Prostate gland (tissue), 2 donors: ENCODE measurements at regions of chr2 and their contacts with region 1.

Region 1: GRCh38 chr2:158745044-158745865 is 49.9 kb upstream of the DAPL1 start:
- DNase-seq: peak; percentile 71
- H3K4me3 ChIP-seq: no peak overlapping the region
- H3K27ac ChIP-seq: no peak overlapping the region
- H3K4me1 ChIP-seq: no peaks in the 10 kb centered on the region
- H3K27me3 ChIP-seq: no peaks in the 10 kb centered on the region
- CTCF ChIP-seq: peak in 3 of 4 experiments; percentile 41 to 73 (median 58)
- POLR2A ChIP-seq: no peak

Region 2: GRCh38 chr2:158024288-158024898 is 720.9 kb before region 1 on chr2:
- intact Hi-C with region 1: loop called (anchors 5 kb)
- DNase-seq: peak; percentile 20
- H3K4me3 ChIP-seq: no peak overlapping the region
- H3K27ac ChIP-seq: no peak overlapping the region
- H3K4me1 ChIP-seq: no peaks in the 10 kb centered on the region
- H3K27me3 ChIP-seq: no peaks in the 10 kb centered on the region
- CTCF ChIP-seq: peak; percentile 14 to 75 (median 71)
- POLR2A ChIP-seq: no peak

Region 3: DNA sequence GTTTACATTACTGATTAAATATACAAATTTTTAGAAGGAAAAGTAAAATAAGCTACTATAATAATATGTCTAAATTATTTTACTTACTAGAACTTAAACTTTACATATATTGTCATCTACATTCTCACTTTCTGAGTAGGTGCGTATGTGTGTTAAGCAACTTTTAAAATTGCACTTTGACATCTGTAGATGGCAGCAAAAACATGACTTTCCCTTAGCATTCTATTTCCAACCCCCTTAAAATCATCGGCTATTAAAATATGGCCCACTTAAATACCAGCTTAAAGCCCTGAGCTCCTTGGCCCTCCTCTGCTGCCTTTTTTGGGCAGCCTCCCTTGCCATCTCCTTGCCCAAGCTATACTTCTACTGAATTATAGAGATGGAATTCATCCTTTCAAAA is 565.6 kb before region 1 on chr2:
- intact Hi-C with region 1: loop called (anchors 5 kb)
- DNase-seq: no peak
- H3K4me3 ChIP-seq: no peak overlapping the region
- H3K27ac ChIP-seq: no peak overlapping the region
- H3K4me1 ChIP-seq: no peaks in the 10 kb centered on the region
- H3K27me3 ChIP-seq: no peaks in the 10 kb centered on the region
- CTCF ChIP-seq: peak in 2 of 4 experiments; percentile 24 to 33
- POLR2A ChIP-seq: no peak